Activated CD4-positive, alpha-beta memory T cell treated with anti-CD3 and anti-CD28 coated beads, Interleukin-2, amount 10 ng/mL, durations not matched to agents 7 days and 5 days (primary cell): ENCODE measurements at regions of chr14 and their contacts with region 1.

Region 1: DNA sequence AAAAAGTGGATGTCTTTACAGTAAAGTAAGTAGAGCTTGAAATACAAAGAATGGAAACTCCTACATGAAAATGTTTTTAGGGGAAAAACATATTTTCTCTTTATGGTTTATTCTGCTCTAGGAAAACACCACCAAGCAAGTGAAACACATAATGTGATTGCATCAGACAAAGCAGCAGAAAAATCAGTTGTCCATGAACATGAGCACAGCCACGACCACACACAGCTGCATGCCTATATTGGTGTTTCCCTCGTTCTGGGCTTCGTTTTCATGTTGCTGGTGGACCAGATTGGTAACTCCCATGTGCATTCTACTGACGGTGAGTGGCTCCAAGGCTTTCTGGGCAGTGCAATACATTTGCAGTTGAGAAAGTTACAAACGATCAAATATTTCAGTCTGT is 42.6 kb upstream of the PLEKHD1 start:
- DNase-seq: no peak
- H3K4me3 Mint-ChIP-seq: no peak overlapping the region
- H3K27ac Mint-ChIP-seq: no peak overlapping the region
- H3K4me1 Mint-ChIP-seq: peaks cover 2% of the 10 kb centered on the region
- H3K27me3 Mint-ChIP-seq: no peaks in the 10 kb centered on the region

Region 2: GRCh38 chr14:69460093-69460701 is 18.2 kb after region 1 on chr14:
- CTCF ChIA-PET with region 1: interaction called, 17 read pairs
- POLR2A ChIA-PET with region 1: no interaction called
- DNase-seq: peak; percentile 64
- H3K4me3 Mint-ChIP-seq: no peak overlapping the region
- H3K27ac Mint-ChIP-seq: no peak overlapping the region
- H3K4me1 Mint-ChIP-seq: no peaks in the 10 kb centered on the region
- H3K27me3 Mint-ChIP-seq: no peaks in the 10 kb centered on the region

Region 3: GRCh38 chr14:69673578-69674305 is 231.8 kb after region 1 on chr14:
- CTCF ChIA-PET with region 1: no interaction called
- POLR2A ChIA-PET with region 1: no interaction called
- DNase-seq: no peak
- H3K4me3 Mint-ChIP-seq: peak overlapping the region; percentile 31
- H3K27ac Mint-ChIP-seq: peak overlapping the region; percentile 95
- H3K4me1 Mint-ChIP-seq: peaks cover 89% of the 10 kb centered on the region
- H3K27me3 Mint-ChIP-seq: no peaks in the 10 kb centered on the region